Posterior vena cava (tissue), 2 donors: ENCODE measurements at regions of chr11 and their contacts with region 1.

Region 1: DNA sequence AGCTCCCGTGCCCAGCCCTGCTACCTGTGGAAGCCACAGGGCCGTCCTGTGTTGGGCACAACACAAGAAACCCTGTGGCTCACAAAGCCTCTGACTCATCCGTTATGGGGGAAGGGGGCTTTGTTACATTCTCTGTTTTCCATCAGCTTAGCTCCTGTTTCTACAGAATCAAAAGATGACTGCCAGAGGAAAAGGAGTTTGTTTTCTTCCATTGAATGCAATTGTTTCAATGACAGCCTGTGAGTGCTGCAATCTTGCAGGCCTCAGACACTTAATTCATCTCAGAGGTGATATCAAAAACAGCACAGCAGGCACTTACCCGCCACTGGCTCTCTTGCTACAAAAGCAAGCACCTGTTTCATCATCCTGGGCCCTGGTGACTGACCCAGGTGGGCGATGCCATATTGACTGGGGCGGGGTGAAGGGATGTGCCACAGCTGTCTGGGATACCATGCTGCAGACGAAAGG is 194.3 kb downstream of the OPCML start:
- DNase-seq: no peak

Region 2: GRCh38 chr11:133323346-133323745 is 14.6 kb before region 1 on chr11:
- intact Hi-C with region 1: loop called in 1 of 2 experiments (anchors 2 kb)
- DNase-seq: no peak